ENCODE measurements at regions of chr1 and their contacts with region 1.

Region 1: GRCh38 chr1:193104906-193105820 is at the start of gene GLRX2:
- DNase-seq: peak; percentile 89
- H3K4me3 ChIP-seq: peak within 1 kb of the TSS; percentile 69 to 81 (median 76)
- H3K27ac ChIP-seq: peak within 1 kb of the TSS; percentile 90 to 99 (median 98)
- H3K4me1 ChIP-seq: peaks cover 8 to 20% (median 11%) of the 10 kb centered on the region in 4 donors
- H3K27me3 ChIP-seq: no peaks in the 10 kb centered on the region
- CTCF ChIP-seq: peak in 1 of 5 experiments; percentile 11
- EP300 ChIP-seq: no peak
- POLR2A ChIP-seq: peak; percentile 88
- total RNA-seq, gene GLRX2: 0.40 to 8.3 (median 3.7) TPM

Region 2: GRCh38 chr1:192998536-192998935 is 106.6 kb before region 1 on chr1:
- in situ Hi-C with region 1: no loop called
- intact Hi-C with region 1: no loop called
- DNase-seq: no peak
- H3K4me3 ChIP-seq: no peak overlapping the region
- H3K27ac ChIP-seq: no peak overlapping the region
- H3K4me1 ChIP-seq: no peaks in the 10 kb centered on the region
- H3K27me3 ChIP-seq: no peaks in the 10 kb centered on the region
- CTCF ChIP-seq: no peak
- EP300 ChIP-seq: no peak
- POLR2A ChIP-seq: no peak

Region 3: DNA sequence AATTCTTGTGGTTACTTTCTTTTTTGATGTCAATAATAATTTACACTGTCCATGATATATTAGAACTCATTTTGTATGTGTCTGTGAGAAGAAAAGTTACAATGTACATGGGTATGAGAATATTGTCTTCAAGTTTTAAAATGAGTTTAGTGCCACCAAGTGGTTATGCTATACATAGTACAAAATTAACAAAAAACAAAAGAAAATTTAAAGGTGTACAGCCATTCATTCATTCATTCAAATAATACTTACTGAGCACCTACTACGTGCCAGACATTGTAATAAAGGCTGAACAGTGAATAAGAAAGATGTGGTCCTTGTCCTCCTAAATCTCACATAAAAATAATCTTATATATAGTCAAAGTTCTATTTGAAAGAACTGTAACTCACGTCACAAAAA is 73.7 kb before region 1 on chr1:
- in situ Hi-C with region 1: no loop called
- intact Hi-C with region 1: no loop called
- DNase-seq: no peak
- H3K4me3 ChIP-seq: no peak overlapping the region
- H3K27ac ChIP-seq: no peak overlapping the region
- H3K4me1 ChIP-seq: peaks cover 0 to 12% (median under 1%) of the 10 kb centered on the region in 4 donors
- H3K27me3 ChIP-seq: no peaks in the 10 kb centered on the region
- CTCF ChIP-seq: peak; percentile 13 to 31 (median 21)
- EP300 ChIP-seq: no peak
- POLR2A ChIP-seq: no peak

Region 4: GRCh38 chr1:193059268-193060225 is 45.6 kb before region 1 on chr1 and contains the starts of genes RO60 and UCHL5:
- in situ Hi-C with region 1: no loop called
- intact Hi-C with region 1: loop called (anchors 5 kb)
- DNase-seq: peak; percentile 97
- H3K4me3 ChIP-seq: peak within 1 kb of the TSS; percentile 77 to 91 (median 82)
- H3K27ac ChIP-seq: peak within 1 kb of the TSS; percentile 96 to 98 (median 96)
- H3K4me1 ChIP-seq: peaks cover 8 to 40% (median 31%) of the 10 kb centered on the region in 4 donors
- H3K27me3 ChIP-seq: no peaks in the 10 kb centered on the region
- CTCF ChIP-seq: no peak
- EP300 ChIP-seq: peak; percentile 48
- POLR2A ChIP-seq: peak; percentile 85
- total RNA-seq, gene RO60: 11.6 to 67.2 (median 62.4) TPM
- total RNA-seq, gene UCHL5: 13.7 to 35.0 (median 26.0) TPM

Region 5: DNA sequence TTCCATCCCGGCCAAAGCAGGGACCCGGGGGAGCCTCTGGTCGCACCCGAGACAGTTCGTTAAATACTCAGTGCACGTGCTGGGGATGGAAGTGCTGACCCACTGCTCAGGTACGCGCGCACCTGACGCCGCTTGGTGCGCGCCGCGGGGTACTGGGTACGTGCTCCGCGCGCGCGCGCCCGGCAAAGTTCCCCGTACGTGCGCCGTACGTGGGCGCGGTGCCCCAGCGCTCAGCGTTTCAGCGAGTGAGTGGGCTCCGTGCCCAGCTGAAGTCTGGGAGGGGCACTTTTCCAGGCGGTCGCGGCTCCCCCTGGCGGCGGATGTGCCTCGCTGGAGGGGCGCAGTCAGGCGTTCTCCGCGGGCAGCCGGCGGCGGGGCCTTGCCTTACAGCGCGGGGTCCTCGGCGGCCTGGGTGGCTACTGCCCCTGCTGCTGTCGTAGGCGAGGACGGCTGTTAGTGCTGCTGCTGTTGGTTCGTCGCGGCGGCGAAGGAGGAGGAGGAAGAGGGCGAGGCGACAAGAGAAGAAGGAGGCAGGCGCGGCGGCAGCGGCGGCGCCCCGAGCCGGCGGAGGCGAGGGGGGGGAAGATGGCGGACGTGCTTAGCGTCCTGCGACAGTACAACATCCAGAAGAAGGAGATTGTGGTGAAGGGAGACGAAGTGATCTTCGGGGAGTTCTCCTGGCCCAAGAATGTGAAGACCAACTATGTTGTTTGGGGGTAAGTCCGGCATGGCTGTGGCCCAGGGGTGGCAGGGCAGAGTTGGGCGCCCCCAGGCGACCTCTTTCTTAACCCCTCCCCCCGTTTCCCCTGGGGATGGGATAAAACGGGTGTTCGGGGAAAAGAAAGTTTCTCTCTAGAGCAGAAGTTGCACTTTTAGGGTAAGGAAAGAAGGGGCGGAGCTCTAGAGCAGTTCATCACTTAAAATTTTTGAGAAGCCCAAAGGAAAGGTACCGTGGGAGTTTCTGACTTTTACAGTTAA is 16.7 kb after region 1 on chr1 and contains the start of gene CDC73:
- in situ Hi-C with region 1: no loop called
- intact Hi-C with region 1: loop called (anchors 2 kb)
- DNase-seq: peak; percentile 99
- H3K4me3 ChIP-seq: peak within 1 kb of the TSS; percentile 41 to 99 (median 81)
- H3K27ac ChIP-seq: peak within 1 kb of the TSS; percentile 94 to 99 (median 96)
- H3K4me1 ChIP-seq: peaks cover 7 to 24% (median 10%) of the 10 kb centered on the region in 4 donors
- H3K27me3 ChIP-seq: no peaks in the 10 kb centered on the region
- CTCF ChIP-seq: peak; percentile 87 to 99 (median 94)
- EP300 ChIP-seq: peak; percentile 76
- POLR2A ChIP-seq: peak; percentile 95
- total RNA-seq, gene CDC73: 26.2 to 208 (median 54.6) TPM

Measured in transverse colon (tissue), 4 donors.